Activated CD8-positive, alpha-beta T cell treated with anti-CD3 and anti-CD28 coated beads for 36 hours (primary cell): ENCODE measurements at regions of chr18 and their contacts with region 1.

Region 1: DNA sequence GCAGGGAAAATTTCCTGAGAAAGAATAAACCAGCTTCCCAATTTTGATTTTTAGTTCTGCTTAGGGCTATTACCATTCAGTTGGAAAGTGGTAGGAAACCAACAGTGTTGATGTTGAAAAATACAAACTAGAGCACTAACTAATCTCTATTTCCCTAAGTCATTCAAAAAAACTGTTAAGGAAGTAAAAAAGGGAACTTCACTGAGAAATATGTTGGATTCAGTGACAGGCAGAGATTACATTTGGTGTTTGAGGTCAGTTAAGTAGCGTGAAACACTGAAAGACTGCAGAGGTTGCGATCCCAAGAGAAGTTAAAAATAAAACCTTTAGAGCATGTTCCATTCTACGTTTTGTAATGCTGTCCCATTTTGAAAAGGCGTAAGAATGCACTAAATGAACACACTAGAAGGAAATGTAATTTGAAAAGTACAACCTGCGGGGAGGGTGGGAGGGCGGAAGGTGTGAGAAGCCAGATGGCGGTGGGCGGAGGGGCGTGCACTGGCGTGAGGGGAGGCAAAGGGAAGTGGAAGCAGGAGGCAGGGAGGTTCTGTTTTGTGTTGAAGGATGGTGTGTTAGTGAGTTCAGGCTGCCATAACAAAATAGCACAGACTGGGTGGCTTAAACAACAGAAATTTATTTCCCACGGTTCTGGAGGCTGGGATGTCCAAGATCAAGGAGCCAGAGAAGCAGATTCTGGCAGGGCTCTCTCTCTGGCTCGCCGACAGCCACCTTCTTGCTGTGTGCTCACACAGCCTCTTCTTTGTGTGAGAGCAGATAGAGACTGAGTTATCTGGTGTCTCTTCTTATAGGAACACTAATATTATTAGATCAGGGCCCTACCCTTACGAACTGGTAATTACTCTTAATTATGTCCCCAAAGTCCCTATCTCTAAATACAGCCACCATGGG is 94.3 kb upstream of the KCTD1 start:
- DNase-seq: no peak
- ATAC-seq: no peak
- H3K4me3 Mint-ChIP-seq: no peak overlapping the region
- H3K27ac Mint-ChIP-seq: no peak overlapping the region
- H3K4me1 Mint-ChIP-seq: no peaks in the 10 kb centered on the region
- H3K27me3 Mint-ChIP-seq: peaks cover 6% of the 10 kb centered on the region
- CTCF ChIP-seq: no peak

Region 2: GRCh38 chr18:26405190-26405801 is 237.4 kb before region 1 on chr18:
- CTCF ChIA-PET with region 1: interaction called, 5 read pairs
- POLR2A ChIA-PET with region 1: no interaction called
- intact Hi-C with region 1: loop called (anchors 10 kb)
- DNase-seq: peak; percentile 30
- ATAC-seq: no peak
- H3K4me3 Mint-ChIP-seq: no peak overlapping the region
- H3K27ac Mint-ChIP-seq: no peak overlapping the region
- H3K4me1 Mint-ChIP-seq: no peaks in the 10 kb centered on the region
- H3K27me3 Mint-ChIP-seq: no peaks in the 10 kb centered on the region
- CTCF ChIP-seq: no peak

Region 3: DNA sequence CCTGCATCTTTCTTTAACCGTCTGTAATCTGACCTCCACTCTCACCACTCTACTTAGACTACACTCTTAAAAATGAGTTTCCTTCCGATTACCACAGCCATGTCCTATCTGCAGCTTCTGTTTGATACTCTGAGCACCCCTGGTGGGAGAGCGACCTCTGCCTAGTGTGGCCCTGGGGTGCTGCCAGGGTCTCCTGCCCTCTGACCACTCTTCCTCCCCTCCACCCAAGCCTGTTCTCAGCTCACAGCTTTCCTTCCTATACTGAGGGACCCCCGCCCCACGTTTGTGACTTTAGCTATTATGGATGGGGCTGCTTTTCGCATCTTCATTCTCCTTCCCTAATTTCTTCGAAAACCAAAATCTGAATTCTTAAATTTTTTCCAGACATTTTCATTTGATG is 227.1 kb before region 1 on chr18:
- CTCF ChIA-PET with region 1: no interaction called
- POLR2A ChIA-PET with region 1: no interaction called
- intact Hi-C with region 1: no loop called
- DNase-seq: no peak
- ATAC-seq: no peak
- H3K4me3 Mint-ChIP-seq: no peak overlapping the region
- H3K27ac Mint-ChIP-seq: no peak overlapping the region
- H3K4me1 Mint-ChIP-seq: no peaks in the 10 kb centered on the region
- H3K27me3 Mint-ChIP-seq: no peaks in the 10 kb centered on the region
- CTCF ChIP-seq: no peak

Region 4: DNA sequence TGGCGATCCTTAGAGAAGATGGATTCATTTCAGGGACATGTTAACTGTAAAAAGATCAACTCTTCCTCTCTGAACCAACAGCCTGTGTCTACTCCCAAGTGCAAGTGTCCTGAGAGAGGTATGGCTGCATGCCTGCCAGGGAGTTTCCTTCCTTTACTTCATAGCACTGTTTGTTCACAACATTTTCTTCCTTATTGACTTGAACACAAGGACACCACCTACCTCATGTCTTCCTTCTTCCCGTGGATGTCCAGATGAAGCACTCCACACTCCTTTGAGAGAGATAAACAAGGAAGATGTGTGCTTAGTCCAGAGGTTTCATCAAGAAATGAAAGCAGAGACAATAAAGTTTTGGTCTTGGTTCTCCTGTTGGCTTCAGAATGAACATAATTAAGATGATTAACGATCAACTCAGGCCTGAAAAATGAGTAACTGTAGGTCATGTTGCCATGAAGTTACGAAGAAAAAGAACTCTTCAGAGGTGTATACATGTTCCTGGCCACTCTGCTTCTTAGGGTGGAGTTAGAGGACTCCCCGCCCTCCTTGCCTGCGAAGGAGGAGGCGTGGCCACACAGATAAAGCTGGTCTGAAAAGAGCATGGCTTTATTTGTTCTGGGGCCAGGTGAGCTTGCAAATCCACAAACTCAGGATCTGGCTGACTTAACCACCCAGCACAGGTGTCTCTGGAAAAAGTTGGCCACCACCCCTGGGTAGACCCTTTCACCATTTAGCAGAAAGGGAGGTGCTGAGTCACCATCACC is 60.7 kb after region 1 on chr18:
- CTCF ChIA-PET with region 1: no interaction called
- POLR2A ChIA-PET with region 1: no interaction called
- intact Hi-C with region 1: loop called (anchors 10 kb)
- DNase-seq: no peak
- ATAC-seq: no peak
- H3K4me3 Mint-ChIP-seq: no peak overlapping the region
- H3K27ac Mint-ChIP-seq: no peak overlapping the region
- H3K4me1 Mint-ChIP-seq: no peaks in the 10 kb centered on the region
- H3K27me3 Mint-ChIP-seq: peaks cover 2% of the 10 kb centered on the region
- CTCF ChIP-seq: no peak